ENCODE measurements at regions of chrX and their contacts with region 1.

Region 1: DNA sequence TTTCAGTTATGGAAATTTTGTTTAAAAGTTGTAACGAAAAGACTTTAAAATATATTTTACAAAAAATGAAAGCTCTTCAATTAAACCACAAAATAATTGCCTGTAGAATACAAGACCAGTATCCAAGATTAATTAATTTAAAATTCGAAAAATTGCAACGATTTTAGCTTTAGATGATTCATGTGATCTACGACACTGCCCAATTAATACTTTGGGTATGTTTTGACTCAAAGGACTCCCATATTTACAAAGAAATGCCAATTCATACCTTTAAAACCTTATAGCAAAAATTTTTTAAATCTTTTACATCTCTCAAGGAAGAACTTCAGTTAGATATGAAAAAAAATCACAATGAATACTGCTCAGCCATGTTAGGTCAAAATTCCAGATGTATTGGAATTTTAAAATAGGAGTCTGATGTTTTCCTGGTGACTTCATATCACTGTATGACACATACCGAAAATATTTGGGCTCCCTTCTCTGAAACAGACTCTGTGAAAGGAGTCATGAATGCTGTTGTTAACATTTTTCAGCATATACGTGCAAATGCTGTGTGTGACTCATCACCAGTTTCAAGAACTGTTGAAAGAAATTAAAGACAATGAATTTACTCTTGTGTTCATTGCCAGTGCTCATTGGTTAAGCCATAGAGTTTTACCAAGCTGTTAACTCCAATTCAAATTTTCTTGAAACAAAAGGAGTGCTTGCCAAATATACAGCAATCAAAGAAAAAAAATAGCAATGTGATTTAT is 13.8 kb upstream of the SMS start:
- DNase-seq: peak; percentile 24 to 94
- H3K4me3 ChIP-seq: no peak overlapping the region
- H3K27ac ChIP-seq: peak overlapping the region; percentile 82
- H3K4me1 ChIP-seq: peaks cover 17% of the 10 kb centered on the region
- H3K27me3 ChIP-seq: no peaks in the 10 kb centered on the region
- CTCF ChIP-seq: no peak

Region 2: DNA sequence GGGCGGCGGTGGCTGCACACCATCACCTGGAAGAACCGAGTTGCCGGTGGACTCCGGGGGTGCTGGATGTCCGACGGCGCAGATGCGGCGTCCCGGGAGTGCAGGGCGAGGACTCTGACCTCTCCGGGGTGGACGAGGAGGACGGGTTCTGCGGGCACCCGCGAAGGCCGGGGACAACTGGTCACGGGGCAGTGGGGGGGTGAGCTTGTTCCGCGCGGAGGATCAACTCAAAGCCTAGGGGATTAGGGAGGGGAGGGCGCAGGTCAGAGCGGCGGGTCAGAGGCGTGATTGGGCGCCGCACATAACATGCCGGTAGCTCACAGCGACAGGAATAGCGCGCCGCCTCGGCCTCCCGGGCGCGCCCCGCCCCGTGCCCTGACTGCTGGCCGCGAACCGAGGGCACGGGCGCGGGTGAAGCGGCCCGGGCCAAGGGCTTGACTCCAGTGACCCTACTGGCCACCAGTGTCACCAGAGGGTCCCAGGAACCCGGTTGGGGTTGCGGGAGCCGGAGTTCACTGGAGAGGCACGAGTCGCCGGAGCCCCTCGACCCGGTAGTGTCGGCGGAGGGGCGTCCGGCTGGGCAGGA is 268.5 kb before region 1 on chrX and contains the start of gene KLHL34:
- CTCF ChIA-PET with region 1: no interaction called
- POLR2A ChIA-PET with region 1: no interaction called
- intact Hi-C with region 1: no loop called
- DNase-seq: no peak
- H3K4me3 ChIP-seq: no peak within 1 kb of the TSS
- H3K27ac ChIP-seq: no peak within 1 kb of the TSS
- H3K4me1 ChIP-seq: peaks cover 19% of the 10 kb centered on the region
- H3K27me3 ChIP-seq: no peaks in the 10 kb centered on the region
- CTCF ChIP-seq: no peak
- total RNA-seq, gene KLHL34: 0.18 TPM in 1 of 2 replicates, not detected in the other

Region 3: DNA sequence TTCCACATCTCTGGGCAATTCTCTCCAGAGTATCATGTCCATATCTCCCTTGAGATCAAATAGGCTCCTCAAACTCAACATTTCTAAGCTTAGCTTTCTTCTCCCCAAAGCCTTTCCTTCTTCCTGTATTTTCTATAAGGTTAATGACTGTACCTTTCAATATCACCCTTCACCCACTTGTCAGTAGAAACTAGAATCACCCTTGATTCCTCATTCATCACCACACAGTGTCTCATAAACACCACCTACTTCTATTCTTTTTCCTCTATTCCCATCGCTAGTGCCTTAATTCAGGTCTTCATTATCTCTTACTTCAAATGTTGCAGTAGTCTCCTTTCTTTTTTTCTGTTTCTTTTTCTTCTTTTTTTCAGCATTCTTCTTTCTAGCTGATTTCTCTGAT is 14.5 kb before region 1 on chrX:
- CTCF ChIA-PET with region 1: no interaction called
- POLR2A ChIA-PET with region 1: interaction called, 22 read pairs
- intact Hi-C with region 1: no loop called
- DNase-seq: no peak
- H3K4me3 ChIP-seq: no peak overlapping the region
- H3K27ac ChIP-seq: no peak overlapping the region
- H3K4me1 ChIP-seq: no peaks in the 10 kb centered on the region
- H3K27me3 ChIP-seq: no peaks in the 10 kb centered on the region
- CTCF ChIP-seq: no peak

Region 4: GRCh38 chrX:22712942-22713341 is 786.2 kb after region 1 on chrX:
- CTCF ChIA-PET with region 1: no interaction called
- POLR2A ChIA-PET with region 1: no interaction called
- intact Hi-C with region 1: no loop called
- DNase-seq: no peak
- H3K4me3 ChIP-seq: no peak overlapping the region
- H3K27ac ChIP-seq: no peak overlapping the region
- H3K4me1 ChIP-seq: no peaks in the 10 kb centered on the region
- H3K27me3 ChIP-seq: no peaks in the 10 kb centered on the region
- CTCF ChIP-seq: no peak